Activated CD8-positive, alpha-beta T cell treated with anti-CD3 and anti-CD28 coated beads, Interleukin-2, amount 10 ng/mL, durations not matched to agents 7 days and 5 days (primary cell): ENCODE measurements at regions of chr3 and their contacts with region 1.

Region 1: DNA sequence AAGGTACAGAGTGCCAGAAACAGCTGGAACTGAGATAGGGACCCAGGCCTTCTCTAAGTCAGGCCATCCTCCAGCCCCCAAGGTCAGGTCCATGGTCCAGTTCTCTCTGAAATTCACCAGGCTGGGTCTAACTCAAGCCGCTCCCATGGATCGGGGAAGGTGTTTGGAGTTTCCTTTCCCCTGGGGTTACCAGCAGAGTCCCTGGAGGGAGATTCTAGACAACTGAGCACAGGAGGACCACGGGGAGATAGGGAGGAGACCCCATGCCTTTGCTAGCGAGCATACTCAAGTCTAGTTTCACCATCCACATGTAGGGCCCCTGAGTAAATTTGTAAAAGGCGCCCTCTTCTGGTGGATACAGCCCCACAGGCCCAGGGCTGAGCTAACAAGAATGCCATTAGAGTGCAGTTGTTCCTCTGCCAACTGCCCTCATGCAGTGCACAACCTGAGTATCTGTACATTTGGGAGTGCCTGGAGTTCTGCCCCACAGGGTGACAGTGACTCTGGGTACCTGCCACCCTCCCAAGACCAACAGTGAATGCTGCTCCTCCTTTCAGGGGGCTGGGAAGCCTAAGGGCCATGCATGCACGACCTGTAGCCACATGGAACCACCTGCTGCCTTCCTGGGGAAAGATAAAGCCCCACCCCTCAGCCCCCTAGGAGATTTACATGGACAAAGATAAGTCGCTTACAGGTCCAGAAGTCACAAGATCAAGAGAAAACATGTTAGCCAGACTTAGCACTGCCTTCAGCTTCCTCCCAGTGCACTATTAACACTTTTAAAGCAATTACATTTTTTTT is 89.0 kb downstream of the IQSEC1 start:
- DNase-seq: peak; percentile 76
- ATAC-seq: peak; percentile 88
- H3K4me3 Mint-ChIP-seq: no peak overlapping the region
- H3K27ac Mint-ChIP-seq: no peak overlapping the region
- H3K4me1 Mint-ChIP-seq: peaks cover 42% of the 10 kb centered on the region
- H3K27me3 Mint-ChIP-seq: no peaks in the 10 kb centered on the region

Region 2: DNA sequence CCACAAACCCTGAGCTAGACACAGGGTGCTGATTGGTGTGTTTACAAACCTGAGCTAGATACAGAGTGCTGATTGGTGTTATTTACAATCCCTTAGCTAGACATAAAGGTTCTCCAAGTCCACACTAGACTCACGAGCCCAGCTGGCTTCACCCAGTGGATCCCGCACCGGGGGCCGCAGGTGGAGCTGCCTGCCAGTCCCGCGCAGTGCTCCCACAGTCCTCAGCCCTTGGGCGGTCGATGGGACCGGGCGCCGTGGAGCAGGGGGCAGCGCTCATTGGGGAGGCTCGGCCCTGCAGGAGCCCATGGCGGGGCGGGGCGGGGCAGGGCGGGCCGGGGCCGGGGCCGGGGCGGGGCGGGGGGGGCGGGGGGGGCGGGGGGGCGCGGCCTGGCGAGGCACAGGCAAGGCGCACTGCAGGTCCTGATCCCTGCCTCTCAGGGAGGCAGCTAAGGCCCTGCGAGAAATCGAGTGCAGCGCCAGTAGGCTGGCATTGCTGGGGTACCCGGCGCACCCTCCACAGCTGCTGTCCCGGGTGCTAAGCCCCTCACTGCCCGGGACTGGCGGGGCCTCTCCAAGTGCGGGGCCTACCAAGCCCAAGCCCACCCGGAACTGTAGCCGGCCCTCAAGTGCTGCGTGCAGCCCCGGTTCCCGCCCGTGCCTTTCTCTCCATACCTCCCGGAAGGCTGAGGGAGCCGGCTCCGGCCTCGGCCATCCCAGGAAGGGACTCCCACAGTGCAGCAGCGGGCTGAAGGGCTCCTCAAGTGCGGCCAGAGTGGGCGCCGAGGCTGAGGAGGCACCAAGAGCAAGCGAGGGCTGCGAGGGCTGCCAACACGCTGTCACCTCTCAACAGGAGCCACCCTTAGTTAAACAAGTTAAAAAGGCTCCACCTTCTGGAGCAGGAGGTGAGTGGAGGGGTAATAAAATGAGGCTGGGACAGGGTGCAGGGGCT is 215.4 kb before region 1 on chr3:
- CTCF ChIA-PET with region 1: no interaction called
- POLR2A ChIA-PET with region 1: no interaction called
- DNase-seq: no peak
- ATAC-seq: no peak
- H3K4me3 Mint-ChIP-seq: no peak overlapping the region
- H3K27ac Mint-ChIP-seq: no peak overlapping the region
- H3K4me1 Mint-ChIP-seq: peaks cover 9% of the 10 kb centered on the region
- H3K27me3 Mint-ChIP-seq: no peaks in the 10 kb centered on the region

Region 3: DNA sequence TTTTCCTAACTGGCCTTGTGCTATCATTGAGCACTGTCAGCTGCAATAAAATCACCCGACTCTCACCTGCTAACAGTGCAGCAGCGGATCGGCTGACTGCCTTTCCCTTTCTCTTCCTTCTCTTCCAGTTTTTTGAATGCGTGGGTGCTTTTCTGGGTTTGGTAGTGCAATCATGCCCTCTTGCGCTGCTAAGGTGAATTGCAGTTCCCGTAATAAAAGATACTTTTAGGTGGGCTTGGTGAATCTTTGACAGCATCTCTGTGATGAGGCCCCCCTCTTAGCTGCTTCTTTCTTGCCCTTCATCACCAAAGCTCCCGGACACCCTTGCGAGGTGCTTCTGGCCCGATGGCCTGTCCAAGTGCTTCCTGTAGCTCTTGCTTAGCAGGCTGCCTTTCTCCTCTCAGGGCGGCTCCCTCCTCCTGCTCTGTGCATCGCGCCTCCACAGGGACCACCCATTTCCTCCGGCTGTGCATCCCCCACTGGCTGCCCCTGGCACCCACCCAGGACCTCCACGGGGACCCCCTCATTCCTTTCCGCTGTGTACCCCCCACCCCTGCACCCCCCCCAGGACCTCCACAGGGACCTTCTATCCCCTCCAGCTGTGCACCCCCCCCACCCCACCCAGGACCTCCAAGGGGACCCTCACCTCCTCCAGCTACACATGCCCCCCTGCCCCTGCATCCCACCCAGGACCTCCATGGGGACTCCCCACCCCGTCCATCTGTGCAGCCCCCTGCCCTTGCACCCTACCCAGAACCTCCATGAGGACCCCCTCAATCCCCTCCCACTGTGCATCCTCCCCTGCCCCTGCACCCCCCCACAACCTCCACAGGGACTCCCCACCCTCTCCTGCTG is 92.0 kb before region 1 on chr3:
- CTCF ChIA-PET with region 1: interaction called, 11 read pairs
- POLR2A ChIA-PET with region 1: no interaction called
- DNase-seq: peak; percentile 57
- ATAC-seq: peak; percentile 37
- H3K4me3 Mint-ChIP-seq: no peak overlapping the region
- H3K27ac Mint-ChIP-seq: no peak overlapping the region
- H3K4me1 Mint-ChIP-seq: peaks cover 3% of the 10 kb centered on the region
- H3K27me3 Mint-ChIP-seq: peaks cover 27% of the 10 kb centered on the region

Region 4: GRCh38 chr3:12916159-12916558 is 68.1 kb before region 1 on chr3:
- CTCF ChIA-PET with region 1: interaction called, 16 read pairs
- POLR2A ChIA-PET with region 1: no interaction called
- DNase-seq: peak; percentile 85
- ATAC-seq: peak; percentile 86
- H3K4me3 Mint-ChIP-seq: peak overlapping the region; percentile 21
- H3K27ac Mint-ChIP-seq: peak overlapping the region; percentile 65
- H3K4me1 Mint-ChIP-seq: peaks cover 31% of the 10 kb centered on the region
- H3K27me3 Mint-ChIP-seq: no peaks in the 10 kb centered on the region

Region 5: GRCh38 chr3:12967606-12968351 is 16.4 kb before region 1 on chr3:
- CTCF ChIA-PET with region 1: interaction called, 15 read pairs
- POLR2A ChIA-PET with region 1: interaction called, 3 read pairs
- DNase-seq: peak; percentile 90
- ATAC-seq: peak; percentile 95
- H3K4me3 Mint-ChIP-seq: peak overlapping the region; percentile 62
- H3K27ac Mint-ChIP-seq: no peak overlapping the region
- H3K4me1 Mint-ChIP-seq: peaks cover 50% of the 10 kb centered on the region
- H3K27me3 Mint-ChIP-seq: peaks cover 4% of the 10 kb centered on the region

Region 6: DNA sequence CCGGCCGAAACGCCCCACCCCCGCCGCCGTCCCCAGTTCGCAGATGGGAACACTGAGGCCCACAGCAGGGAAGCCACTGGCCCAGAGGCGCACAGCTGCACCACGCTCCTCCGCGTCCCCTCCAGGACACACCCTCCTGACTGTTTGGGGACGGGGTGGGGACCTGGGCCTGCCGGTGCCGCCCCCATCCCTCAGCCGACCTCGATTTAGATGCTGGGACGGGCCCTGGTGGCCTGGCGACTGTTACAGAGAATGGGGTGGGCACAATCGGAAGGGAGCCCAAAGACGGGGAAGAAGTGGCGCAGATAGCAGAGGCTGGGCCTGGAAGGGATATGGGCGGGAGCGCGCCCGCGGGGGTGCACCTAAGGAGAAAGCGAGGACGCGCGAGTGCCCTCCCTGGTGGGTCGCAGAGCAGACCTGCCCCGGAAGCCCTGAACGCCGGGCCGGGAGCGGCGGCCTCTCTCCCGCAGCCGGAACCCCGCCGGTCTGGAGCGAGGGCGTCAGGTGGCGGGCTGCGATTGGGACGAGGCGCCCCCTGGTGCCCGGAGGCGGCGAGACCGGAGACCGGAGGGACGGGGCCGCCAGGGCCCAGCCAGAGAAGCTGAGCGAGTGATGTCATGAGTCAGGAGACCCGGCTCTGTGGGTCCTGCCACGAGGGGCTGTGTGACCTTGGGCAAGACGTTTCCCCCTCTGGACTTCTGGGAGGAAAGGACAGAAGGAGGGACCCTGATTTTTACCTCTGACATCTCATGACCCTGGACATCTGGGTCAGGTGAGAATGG is 10.6 kb after region 1 on chr3:
- CTCF ChIA-PET with region 1: interaction called, 52 read pairs
- POLR2A ChIA-PET with region 1: interaction called, 3 read pairs
- DNase-seq: peak; percentile 86
- ATAC-seq: peak; percentile 90
- H3K4me3 Mint-ChIP-seq: peak overlapping the region; percentile 76
- H3K27ac Mint-ChIP-seq: peak overlapping the region; percentile 44
- H3K4me1 Mint-ChIP-seq: peaks cover 25% of the 10 kb centered on the region
- H3K27me3 Mint-ChIP-seq: no peaks in the 10 kb centered on the region